ENCODE measurements at regions of chr3 and their contacts with region 1.

Region 1: GRCh38 chr3:157493627-157494550 is 9.3 kb downstream of the VEPH1 start:
- DNase-seq: no peak
- H3K4me3 ChIP-seq: no peak overlapping the region
- H3K27ac ChIP-seq: no peak overlapping the region
- H3K4me1 ChIP-seq: peaks cover under 1% of the 10 kb centered on the region
- H3K27me3 ChIP-seq: peaks cover 8% of the 10 kb centered on the region
- CTCF ChIP-seq: peak; percentile 77

Region 2: GRCh38 chr3:157201648-157202278 is 292.1 kb before region 1 on chr3:
- intact Hi-C with region 1: loop called (anchors 5 kb)
- DNase-seq: no peak
- H3K4me3 ChIP-seq: no peak overlapping the region
- H3K27ac ChIP-seq: no peak overlapping the region
- H3K4me1 ChIP-seq: peaks cover 13% of the 10 kb centered on the region
- H3K27me3 ChIP-seq: no peaks in the 10 kb centered on the region
- CTCF ChIP-seq: peak; percentile 54